ENCODE measurements at regions of chr1 and their contacts with region 1.

Region 1: DNA sequence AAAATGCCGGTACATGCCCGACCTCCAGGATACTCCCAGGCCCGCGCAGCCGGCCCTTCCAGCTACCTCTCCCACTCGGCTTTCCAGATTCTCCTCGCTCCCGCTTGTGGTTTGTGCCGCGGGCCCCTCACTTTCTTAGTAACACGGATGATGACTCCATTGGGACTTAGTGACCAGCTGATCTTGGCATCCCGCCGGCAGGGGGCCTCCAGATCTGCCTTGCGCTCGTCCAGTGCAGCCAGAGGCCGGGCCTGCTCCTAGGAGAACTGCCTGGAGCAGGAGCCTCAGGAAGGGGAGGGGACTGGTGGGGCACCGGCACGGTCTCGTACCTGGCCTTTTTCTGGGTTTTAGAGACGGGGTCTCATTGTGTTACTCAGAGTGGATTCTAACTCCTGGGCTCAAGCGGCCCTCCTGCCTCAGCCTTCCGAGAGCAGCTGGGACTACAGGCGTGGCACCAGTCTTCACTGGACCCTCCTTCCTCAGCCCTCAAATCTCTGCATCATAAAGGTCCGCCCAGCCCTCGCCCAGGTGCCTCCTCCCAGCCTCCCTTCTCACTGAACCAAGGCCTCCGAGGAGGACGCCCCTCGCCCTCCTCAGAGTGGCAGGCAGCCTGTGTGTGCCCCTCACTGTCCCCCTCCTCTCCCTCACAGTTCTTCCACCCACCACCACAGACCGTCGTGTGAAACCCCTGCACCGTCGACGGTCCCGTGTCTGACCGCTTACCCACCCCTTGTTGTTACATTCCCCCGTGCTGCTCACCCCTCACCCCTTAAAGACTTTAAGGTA is 78.6 kb downstream of the SLC25A24 start:
- DNase-seq: peak in 1 of 2 donors; percentile 65
- H3K4me3 ChIP-seq: no peak overlapping the region
- H3K27ac ChIP-seq: no peak overlapping the region
- H3K4me1 ChIP-seq: peaks cover 0 to 14% (median 9%) of the 10 kb centered on the region in 4 donors
- H3K27me3 ChIP-seq: peaks cover 0 to 12% (median 0%) of the 10 kb centered on the region in 3 donors
- CTCF ChIP-seq: no peak
- EP300 ChIP-seq: no peak
- POLR2A ChIP-seq: no peak

Region 2: DNA sequence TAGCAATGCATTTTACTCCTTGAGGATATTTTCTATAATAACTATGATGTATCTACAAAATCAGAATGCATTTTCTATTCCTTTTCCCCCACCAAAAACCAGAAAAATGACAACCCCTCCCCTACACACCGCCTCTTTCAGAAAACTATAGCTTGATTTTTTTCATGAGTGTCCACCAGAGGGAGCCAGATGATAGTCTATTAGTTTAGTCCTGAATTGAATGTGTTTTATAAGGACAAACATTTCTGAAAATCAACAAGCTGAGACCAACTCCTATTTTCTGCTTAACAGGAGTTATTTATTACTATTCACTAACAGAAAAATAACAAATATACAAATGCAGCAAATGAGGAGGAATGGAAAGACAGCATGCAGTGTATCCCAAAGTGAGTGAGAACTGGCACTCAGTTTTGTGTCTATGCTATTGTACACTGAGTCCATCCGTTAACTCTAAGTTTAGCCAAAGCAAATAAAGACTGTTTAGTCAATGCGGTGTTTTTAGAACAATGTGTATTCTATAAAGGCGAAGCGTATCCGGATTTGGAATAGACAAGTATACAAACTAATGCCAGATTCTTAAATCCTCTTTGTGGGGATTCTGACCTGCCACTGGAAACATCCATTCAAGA is 339.2 kb before region 1 on chr1:
- intact Hi-C with region 1: loop called (anchors 5 kb)
- DNase-seq: peak in 1 of 2 donors; percentile 84
- H3K4me3 ChIP-seq: no peak overlapping the region
- H3K27ac ChIP-seq: no peak overlapping the region
- H3K4me1 ChIP-seq: peaks cover 0 to 28% (median 8%) of the 10 kb centered on the region in 4 donors
- H3K27me3 ChIP-seq: no peaks in the 10 kb centered on the region
- CTCF ChIP-seq: peak in 5 of 7 experiments; percentile 41 to 76 (median 74)
- EP300 ChIP-seq: no peak
- POLR2A ChIP-seq: no peak

Region 3: GRCh38 chr1:108082738-108083481 is 38.6 kb before region 1 on chr1:
- intact Hi-C with region 1: no loop called
- DNase-seq: no peak
- H3K4me3 ChIP-seq: no peak overlapping the region
- H3K27ac ChIP-seq: no peak overlapping the region
- H3K4me1 ChIP-seq: no peaks in the 10 kb centered on the region
- H3K27me3 ChIP-seq: no peaks in the 10 kb centered on the region
- CTCF ChIP-seq: no peak
- EP300 ChIP-seq: no peak
- POLR2A ChIP-seq: no peak

Measured in stomach (tissue), 19 donors.